Activated CD4-positive, alpha-beta memory T cell treated with anti-CD3 and anti-CD28 coated beads, Interleukin-2, amount 10 ng/mL, durations not matched to agents 7 days and 5 days (primary cell): ENCODE measurements at regions of chr14 and their contacts with region 1.

Region 1: GRCh38 chr14:103606963-103607668 is 21.9 kb upstream of the KLC1 start:
- DNase-seq: peak; percentile 79
- H3K4me3 Mint-ChIP-seq: peak overlapping the region; percentile 68
- H3K27ac Mint-ChIP-seq: peak overlapping the region; percentile 23
- H3K4me1 Mint-ChIP-seq: peaks cover 26% of the 10 kb centered on the region
- H3K27me3 Mint-ChIP-seq: peaks cover 27% of the 10 kb centered on the region

Region 2: GRCh38 chr14:103628684-103629502 is 21.8 kb after region 1 on chr14 and contains the start of gene KLC1:
- CTCF ChIA-PET with region 1: interaction called, 4 read pairs
- POLR2A ChIA-PET with region 1: interaction called, 11 read pairs
- DNase-seq: peak; percentile 86
- H3K4me3 Mint-ChIP-seq: peak within 1 kb of the TSS; percentile 88
- H3K27ac Mint-ChIP-seq: peak within 1 kb of the TSS; percentile 87
- H3K4me1 Mint-ChIP-seq: peaks cover 49% of the 10 kb centered on the region
- H3K27me3 Mint-ChIP-seq: no peaks in the 10 kb centered on the region
- total RNA-seq, gene KLC1: 152 to 160 TPM